ENCODE measurements at regions of chr18 and their contacts with region 1.

Region 1: GRCh38 chr18:61887841-61888240 is 5.0 kb downstream of the RNF152 start:
- DNase-seq: no peak
- ATAC-seq: no peak
- H3K4me3 ChIP-seq: no peak overlapping the region
- H3K27ac ChIP-seq: peak overlapping the region in 5 of 10 donors; percentile 32 to 96 (median 48)
- H3K4me1 ChIP-seq: peaks cover 0 to 88% (median 23%) of the 10 kb centered on the region in 9 donors
- H3K27me3 ChIP-seq: peaks cover 0 to 22% (median 0%) of the 10 kb centered on the region in 7 donors
- CTCF ChIP-seq: no peak

Region 2: DNA sequence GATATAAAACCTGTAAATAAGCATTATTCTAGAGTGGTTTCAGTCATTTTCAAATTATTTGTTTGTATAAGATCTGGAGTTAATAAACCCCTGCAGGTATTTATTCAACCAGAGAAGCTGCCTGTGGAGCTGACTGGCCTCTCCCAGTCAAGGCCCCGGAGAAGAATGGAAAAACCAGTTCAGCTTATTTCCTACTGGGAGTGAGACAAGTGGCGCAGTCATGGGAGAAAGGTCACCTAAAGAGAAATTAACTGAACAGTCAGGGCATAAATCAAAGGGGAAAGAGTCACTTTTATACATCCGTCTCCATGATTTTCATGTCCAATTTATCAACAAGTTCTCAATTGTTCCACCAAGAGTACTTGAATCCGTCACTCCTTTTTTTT is 236.0 kb before region 1 on chr18:
- intact Hi-C with region 1: loop called in 1 of 10 experiments (anchors 5 kb)
- DNase-seq: no peak
- ATAC-seq: no peak
- H3K4me3 ChIP-seq: no peak overlapping the region
- H3K27ac ChIP-seq: no peak overlapping the region
- H3K4me1 ChIP-seq: peaks cover 0 to 7% (median 0%) of the 10 kb centered on the region in 9 donors
- H3K27me3 ChIP-seq: no peaks in the 10 kb centered on the region
- CTCF ChIP-seq: no peak

Region 3: DNA sequence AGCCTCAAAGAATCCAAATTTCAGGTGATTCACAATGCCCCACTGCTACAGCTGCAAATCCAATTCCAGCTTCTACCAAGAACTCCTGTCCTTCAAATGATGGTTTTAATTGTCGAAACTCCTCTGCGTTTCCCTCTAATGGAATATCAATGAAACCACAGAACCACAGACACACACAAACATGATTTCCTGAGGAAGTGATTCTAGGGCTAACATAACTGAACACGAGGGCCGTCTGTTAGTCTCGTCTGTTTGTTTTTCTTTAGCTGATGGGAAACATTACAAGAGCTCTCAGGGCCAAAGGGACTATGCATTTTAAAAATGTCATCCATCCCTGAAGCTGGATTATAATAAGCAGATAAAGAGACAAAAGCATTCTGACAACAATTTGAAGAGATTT is 54.5 kb before region 1 on chr18:
- intact Hi-C with region 1: loop called in 2 of 10 experiments (anchors 5 kb)
- DNase-seq: no peak
- ATAC-seq: peak in 7 of 8 donors; percentile 35 to 75 (median 63)
- H3K4me3 ChIP-seq: peak overlapping the region in 1 of 10 donors; percentile 5
- H3K27ac ChIP-seq: peak overlapping the region in 6 of 10 donors; percentile 8 to 71 (median 44)
- H3K4me1 ChIP-seq: peaks cover 3 to 69% (median 36%) of the 10 kb centered on the region in 9 donors
- H3K27me3 ChIP-seq: peaks cover 0 to 47% (median 0%) of the 10 kb centered on the region in 7 donors
- CTCF ChIP-seq: no peak

Measured in heart right ventricle (tissue), 16 donors.